ENCODE measurements at regions of chr11 and their contacts with region 1.

Region 1: DNA sequence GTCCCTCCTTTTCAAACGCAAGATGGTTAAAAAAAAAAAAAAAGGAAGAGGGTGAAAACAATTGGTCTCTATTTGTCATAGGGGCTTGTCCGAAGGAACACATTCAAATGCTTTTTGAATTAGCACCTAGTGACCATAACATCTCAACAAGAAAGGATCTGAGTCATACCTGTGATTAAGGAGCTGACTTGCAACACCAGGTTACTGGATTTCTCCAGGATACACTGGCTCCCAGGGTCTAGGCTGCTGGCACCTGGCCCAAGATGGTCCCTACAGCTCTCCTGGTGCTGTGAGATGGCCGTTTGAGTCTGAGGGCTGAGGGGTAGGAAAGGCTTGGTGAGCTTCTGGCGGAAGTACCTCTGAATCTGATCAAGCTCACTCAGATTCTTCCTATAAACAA is 28.4 kb upstream of the UCP3 start:
- DNase-seq: peak; percentile 71 to 100
- H3K4me3 ChIP-seq: no peak overlapping the region
- H3K27ac ChIP-seq: peak overlapping the region; percentile 84
- H3K4me1 ChIP-seq: peaks cover 38% of the 10 kb centered on the region
- H3K27me3 ChIP-seq: no peaks in the 10 kb centered on the region
- CTCF ChIP-seq: no peak

Region 2: GRCh38 chr11:72157126-72157525 is 1880.2 kb before region 1 on chr11:
- CTCF ChIA-PET with region 1: no interaction called
- POLR2A ChIA-PET with region 1: interaction called, 26 read pairs
- intact Hi-C with region 1: no loop called
- DNase-seq: peak in 1 of 2 experiments; percentile 20
- H3K4me3 ChIP-seq: no peak overlapping the region
- H3K27ac ChIP-seq: no peak overlapping the region
- H3K4me1 ChIP-seq: no peaks in the 10 kb centered on the region
- H3K27me3 ChIP-seq: no peaks in the 10 kb centered on the region
- CTCF ChIP-seq: no peak

Region 3: DNA sequence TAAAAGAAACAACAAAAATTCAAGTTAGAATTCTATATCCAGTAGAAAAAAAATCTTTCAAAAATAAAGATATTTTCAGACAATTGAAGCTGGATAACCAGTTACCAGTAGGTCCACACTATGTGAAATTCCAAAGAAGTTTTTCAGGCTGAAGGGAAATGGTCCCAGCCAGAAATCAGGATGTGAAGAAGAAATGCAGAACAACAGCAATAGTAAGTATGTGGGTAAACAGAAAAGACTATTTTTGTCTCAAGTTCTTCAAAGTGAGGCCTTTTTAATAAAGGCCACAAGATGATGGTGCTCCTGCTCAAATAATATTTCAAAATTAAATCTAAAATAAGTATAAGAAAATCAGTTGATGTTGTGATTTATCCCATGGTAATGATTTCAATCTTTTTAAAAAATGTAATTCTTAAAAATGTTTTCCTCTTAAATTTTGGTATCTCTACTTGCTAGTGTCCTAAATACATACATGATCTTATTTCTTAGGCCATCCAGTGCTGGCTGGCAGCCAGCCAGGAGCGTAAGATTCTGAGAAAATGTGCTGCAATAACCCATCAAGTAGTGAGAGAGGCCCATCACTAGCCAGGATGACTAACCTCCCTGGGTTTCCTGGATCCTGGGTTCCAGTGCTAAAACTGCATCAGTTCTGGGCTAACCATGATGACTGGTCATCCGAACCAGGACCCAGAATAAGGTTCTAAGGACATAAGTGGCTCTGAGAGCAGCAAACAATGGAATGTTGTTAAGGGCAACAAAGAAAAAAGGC is 12.9 kb before region 1 on chr11:
- CTCF ChIA-PET with region 1: no interaction called
- POLR2A ChIA-PET with region 1: interaction called, 13 read pairs
- intact Hi-C with region 1: no loop called
- DNase-seq: no peak
- H3K4me3 ChIP-seq: no peak overlapping the region
- H3K27ac ChIP-seq: peak overlapping the region; percentile 68
- H3K4me1 ChIP-seq: peaks cover 52% of the 10 kb centered on the region
- H3K27me3 ChIP-seq: no peaks in the 10 kb centered on the region
- CTCF ChIP-seq: no peak

Region 4: DNA sequence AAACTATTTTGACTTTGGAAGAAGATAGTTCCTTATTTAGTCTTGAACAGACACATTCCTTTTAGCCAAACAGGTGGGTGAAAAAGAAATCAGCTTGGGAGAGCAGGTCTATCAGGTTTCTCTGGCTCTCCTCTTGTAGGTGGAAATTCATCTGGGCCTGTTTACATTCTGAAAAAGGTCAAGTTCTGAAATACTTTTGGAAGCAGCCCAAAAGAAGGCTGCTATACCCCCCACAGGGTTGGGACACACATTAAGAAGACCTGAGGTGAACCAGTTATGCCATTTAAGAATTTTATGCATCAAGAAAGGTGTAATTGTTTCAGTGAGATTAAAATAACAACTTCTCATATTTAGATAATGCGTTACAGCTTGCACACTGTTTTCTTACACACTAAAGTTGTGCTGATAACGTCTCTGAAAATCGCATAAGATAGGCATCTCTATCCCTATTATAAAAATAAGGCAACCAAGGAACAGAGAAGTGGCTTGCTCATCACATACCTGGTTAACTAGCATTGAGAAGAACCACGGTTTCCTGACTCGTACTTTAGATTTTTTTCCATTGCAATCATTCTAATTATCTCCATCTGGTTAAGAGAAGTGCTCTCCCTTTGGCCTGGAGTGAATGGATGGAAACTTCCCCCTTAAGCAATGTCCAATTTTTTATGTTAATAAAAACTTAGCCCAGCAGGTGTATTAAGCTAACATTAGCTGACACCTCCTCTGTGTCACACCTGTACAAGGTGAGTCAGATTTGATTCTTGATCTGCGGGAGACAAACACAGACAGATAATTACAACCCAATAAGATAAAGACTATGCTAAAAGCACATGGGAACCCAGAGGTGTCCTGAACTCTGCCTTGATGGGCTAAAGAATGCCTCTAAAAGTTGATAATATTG is 32.1 kb after region 1 on chr11:
- CTCF ChIA-PET with region 1: no interaction called
- POLR2A ChIA-PET with region 1: no interaction called
- intact Hi-C with region 1: loop called (anchors 1 kb)
- DNase-seq: peak; percentile 69 to 100
- H3K4me3 ChIP-seq: peak overlapping the region; percentile 11; the same call in 1 of the 2 replicates
- H3K27ac ChIP-seq: peak overlapping the region; percentile 94
- H3K4me1 ChIP-seq: peaks cover 75% of the 10 kb centered on the region
- H3K27me3 ChIP-seq: no peaks in the 10 kb centered on the region
- CTCF ChIP-seq: no peak

Measured in PC-9 (cell line).